Mammary epithelial cell (primary cell): ENCODE measurements at regions of chr20 and their contacts with region 1.

Region 1: GRCh38 chr20:34876162-34877001 is at the start of gene ACSS2:
- DNase-seq: peak; percentile 99
- H3K4me3 ChIP-seq: peak within 1 kb of the TSS; percentile 55 to 79 (median 74)
- H3K27ac ChIP-seq: peak within 1 kb of the TSS; percentile 71
- H3K4me1 ChIP-seq: peaks cover 34% of the 10 kb centered on the region
- H3K27me3 ChIP-seq: no peaks in the 10 kb centered on the region
- CTCF ChIP-seq: no peak
- total RNA-seq, gene ACSS2: 79.5 to 103 TPM

Region 2: DNA sequence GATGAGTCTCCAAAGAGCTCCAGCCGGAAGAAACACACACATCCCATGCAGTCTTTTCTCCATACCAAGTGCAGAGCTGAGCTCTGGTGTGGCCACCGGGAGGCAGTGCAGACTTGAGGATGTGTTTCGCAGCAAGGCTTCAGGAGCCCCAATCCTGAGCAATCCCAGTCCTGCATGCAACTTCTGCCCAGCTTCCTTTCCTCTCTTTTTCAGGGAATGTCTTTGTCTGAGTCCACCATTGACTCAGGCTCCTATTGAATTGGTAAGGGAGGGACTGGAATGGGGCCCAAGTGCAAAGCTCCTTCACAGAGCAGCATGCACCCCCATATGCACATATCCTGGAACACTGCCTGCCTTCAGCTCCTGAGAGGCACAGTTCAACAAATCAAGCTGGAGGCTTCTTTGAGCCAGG is 685.7 kb before region 1 on chr20:
- CTCF ChIA-PET with region 1: no interaction called
- dilution Hi-C with region 1: no loop called
- in situ Hi-C with region 1: no loop called
- intact Hi-C with region 1: loop called (anchors 5 kb)
- DNase-seq: peak; percentile 68
- H3K4me3 ChIP-seq: no peak overlapping the region
- H3K27ac ChIP-seq: no peak overlapping the region
- H3K4me1 ChIP-seq: no peaks in the 10 kb centered on the region
- H3K27me3 ChIP-seq: no peaks in the 10 kb centered on the region
- CTCF ChIP-seq: peak; percentile 84 to 89

Region 3: GRCh38 chr20:34268851-34269636 is 607.3 kb before region 1 on chr20:
- CTCF ChIA-PET with region 1: no interaction called
- dilution Hi-C with region 1: no loop called
- in situ Hi-C with region 1: no loop called
- intact Hi-C with region 1: no loop called
- DNase-seq: no peak
- H3K4me3 ChIP-seq: no peak overlapping the region
- H3K27ac ChIP-seq: no peak overlapping the region
- H3K4me1 ChIP-seq: peaks cover 3% of the 10 kb centered on the region
- H3K27me3 ChIP-seq: no peaks in the 10 kb centered on the region
- CTCF ChIP-seq: no peak

Region 4: GRCh38 chr20:34732523-34732922 is 143.9 kb before region 1 on chr20:
- CTCF ChIA-PET with region 1: no interaction called
- dilution Hi-C with region 1: no loop called
- in situ Hi-C with region 1: no loop called
- intact Hi-C with region 1: no loop called
- DNase-seq: no peak
- H3K4me3 ChIP-seq: no peak overlapping the region
- H3K27ac ChIP-seq: no peak overlapping the region
- H3K4me1 ChIP-seq: no peaks in the 10 kb centered on the region
- H3K27me3 ChIP-seq: no peaks in the 10 kb centered on the region
- CTCF ChIP-seq: no peak

Region 5: GRCh38 chr20:34834459-34834893 is 41.9 kb before region 1 on chr20:
- CTCF ChIA-PET with region 1: interaction called, 7 read pairs
- dilution Hi-C with region 1: no loop called
- in situ Hi-C with region 1: no loop called
- intact Hi-C with region 1: loop called (anchors 2 kb)
- DNase-seq: peak; percentile 16
- H3K4me3 ChIP-seq: peak overlapping the region in 1 of 3 experiments; percentile 28
- H3K27ac ChIP-seq: no peak overlapping the region
- H3K4me1 ChIP-seq: no peaks in the 10 kb centered on the region
- H3K27me3 ChIP-seq: peaks cover 4% of the 10 kb centered on the region
- CTCF ChIP-seq: peak; percentile 20 to 39

Region 6: DNA sequence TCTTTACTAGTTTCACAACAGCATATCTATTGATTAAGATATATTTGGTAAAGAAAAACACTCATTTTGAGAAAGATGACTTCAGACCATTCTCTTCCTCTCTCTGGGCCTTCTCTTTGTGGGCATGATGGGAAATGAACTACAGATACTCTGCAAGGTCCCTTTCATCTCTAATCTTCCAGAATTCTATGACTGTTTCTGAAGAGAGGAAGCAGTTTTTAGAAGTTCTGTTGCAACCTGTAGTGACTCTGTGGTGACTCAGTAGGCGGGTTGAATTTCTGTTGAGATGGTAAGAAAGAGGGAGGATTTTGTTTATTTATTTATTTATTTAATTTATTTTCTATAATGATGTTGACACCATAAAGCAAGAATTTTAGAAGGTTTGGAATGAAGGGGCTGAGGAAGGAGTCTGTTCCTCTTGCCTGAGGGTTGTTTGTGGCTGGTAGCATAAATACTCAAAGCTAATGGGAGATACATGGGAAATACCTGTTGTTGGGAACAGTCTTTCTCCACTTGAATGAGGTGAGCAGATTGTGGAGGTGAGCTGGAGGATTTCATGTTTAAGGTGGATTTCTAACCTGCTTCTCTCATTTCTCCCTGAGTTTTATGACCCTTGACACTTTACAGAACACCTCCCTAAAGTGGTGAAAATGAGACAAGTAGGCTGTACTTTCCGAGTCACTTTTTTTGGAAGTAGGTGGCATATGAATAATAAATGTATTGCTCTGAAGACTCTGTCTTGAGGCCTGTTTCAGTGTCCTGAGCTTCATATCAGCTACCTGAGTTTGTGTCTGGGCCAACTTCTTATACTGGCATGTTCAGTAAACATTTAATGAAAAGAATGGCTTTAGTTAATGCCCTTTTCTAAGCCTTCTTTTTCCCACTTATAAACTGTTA is 15.0 kb after region 1 on chr20:
- CTCF ChIA-PET with region 1: no interaction called
- dilution Hi-C with region 1: no loop called
- in situ Hi-C with region 1: no loop called
- intact Hi-C with region 1: loop called (anchors 1 kb)
- DNase-seq: peak; percentile 84
- H3K4me3 ChIP-seq: no peak overlapping the region
- H3K27ac ChIP-seq: peak overlapping the region; percentile 40
- H3K4me1 ChIP-seq: peaks cover 27% of the 10 kb centered on the region
- H3K27me3 ChIP-seq: no peaks in the 10 kb centered on the region
- CTCF ChIP-seq: no peak

Region 7: DNA sequence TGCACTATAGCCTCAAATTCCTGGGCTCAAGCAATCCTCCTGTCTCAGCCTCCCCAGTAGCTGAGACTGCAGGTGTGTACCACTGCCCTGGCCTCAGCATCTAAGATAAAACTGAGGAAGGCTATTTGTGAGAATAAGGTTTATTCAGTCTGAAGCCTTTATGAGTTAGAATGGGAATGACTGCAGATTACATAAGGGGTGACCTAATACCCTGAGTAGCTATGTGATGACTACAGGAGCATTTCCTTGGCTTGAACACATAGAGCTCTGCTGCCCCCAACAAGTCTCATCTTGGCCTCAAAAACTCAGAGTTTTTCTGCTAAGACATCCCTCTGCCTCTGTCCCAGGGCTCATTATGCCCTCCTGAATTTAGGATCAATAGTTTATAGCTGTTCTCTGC is 71.6 kb after region 1 on chr20:
- CTCF ChIA-PET with region 1: interaction called, 11 read pairs
- dilution Hi-C with region 1: no loop called
- in situ Hi-C with region 1: no loop called
- intact Hi-C with region 1: loop called (anchors 1 kb)
- DNase-seq: peak; percentile 67
- H3K4me3 ChIP-seq: no peak overlapping the region
- H3K27ac ChIP-seq: no peak overlapping the region
- H3K4me1 ChIP-seq: peaks cover 31% of the 10 kb centered on the region
- H3K27me3 ChIP-seq: no peaks in the 10 kb centered on the region
- CTCF ChIP-seq: peak in 1 of 2 donors; percentile 34

Region 8: GRCh38 chr20:34970193-34970840 is 93.9 kb after region 1 on chr20:
- CTCF ChIA-PET with region 1: no interaction called
- dilution Hi-C with region 1: no loop called
- in situ Hi-C with region 1: no loop called
- intact Hi-C with region 1: no loop called
- DNase-seq: no peak
- H3K4me3 ChIP-seq: no peak overlapping the region
- H3K27ac ChIP-seq: no peak overlapping the region
- H3K4me1 ChIP-seq: no peaks in the 10 kb centered on the region
- H3K27me3 ChIP-seq: no peaks in the 10 kb centered on the region
- CTCF ChIP-seq: no peak

Region 9: GRCh38 chr20:35001596-35002362 is 125.4 kb after region 1 on chr20:
- CTCF ChIA-PET with region 1: interaction called, 4 read pairs
- dilution Hi-C with region 1: no loop called
- in situ Hi-C with region 1: no loop called
- intact Hi-C with region 1: loop called (anchors 1 kb)
- DNase-seq: no peak
- H3K4me3 ChIP-seq: no peak overlapping the region
- H3K27ac ChIP-seq: no peak overlapping the region
- H3K4me1 ChIP-seq: no peaks in the 10 kb centered on the region
- H3K27me3 ChIP-seq: no peaks in the 10 kb centered on the region
- CTCF ChIP-seq: peak; percentile 21 to 36

Region 10: DNA sequence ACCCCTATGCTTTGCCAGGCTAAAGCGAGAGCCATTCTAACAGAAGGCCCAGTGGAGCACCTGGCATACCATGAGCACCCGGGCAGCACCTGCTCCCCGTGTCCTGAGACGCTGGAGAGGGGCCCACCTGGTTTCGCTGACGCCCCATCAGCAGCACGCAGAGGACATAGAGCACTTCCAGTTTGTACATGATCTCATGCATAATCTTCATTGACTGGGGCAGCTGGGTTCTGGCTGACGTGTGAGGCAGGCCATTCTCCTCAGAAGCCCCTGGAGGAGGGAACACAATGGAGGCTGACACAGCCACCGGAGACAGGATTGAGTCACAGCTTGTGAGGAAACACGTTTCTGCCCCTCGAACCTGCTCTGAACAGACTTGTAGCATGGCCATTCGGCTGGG is 144.7 kb after region 1 on chr20:
- CTCF ChIA-PET with region 1: no interaction called
- dilution Hi-C with region 1: no loop called
- in situ Hi-C with region 1: no loop called
- intact Hi-C with region 1: no loop called
- DNase-seq: no peak
- H3K4me3 ChIP-seq: no peak overlapping the region
- H3K27ac ChIP-seq: no peak overlapping the region
- H3K4me1 ChIP-seq: no peaks in the 10 kb centered on the region
- H3K27me3 ChIP-seq: no peaks in the 10 kb centered on the region
- CTCF ChIP-seq: no peak

Region 11: GRCh38 chr20:35146920-35147574 is 270.7 kb after region 1 on chr20 and contains the start of gene EDEM2:
- CTCF ChIA-PET with region 1: interaction called, 3 read pairs
- dilution Hi-C with region 1: no loop called
- in situ Hi-C with region 1: no loop called
- intact Hi-C with region 1: loop called (anchors 5 kb)
- DNase-seq: peak; percentile 95
- H3K4me3 ChIP-seq: peak within 1 kb of the TSS; percentile 64 to 90 (median 87)
- H3K27ac ChIP-seq: peak within 1 kb of the TSS; percentile 81
- H3K4me1 ChIP-seq: peaks cover 11% of the 10 kb centered on the region
- H3K27me3 ChIP-seq: no peaks in the 10 kb centered on the region
- CTCF ChIP-seq: no peak
- total RNA-seq, gene EDEM2: 22.3 to 33.2 TPM